Activated CD8-positive, alpha-beta T cell treated with anti-CD3 and anti-CD28 coated beads for 36 hours (primary cell): ENCODE measurements at regions of chr4 and their contacts with region 1.

Region 1: DNA sequence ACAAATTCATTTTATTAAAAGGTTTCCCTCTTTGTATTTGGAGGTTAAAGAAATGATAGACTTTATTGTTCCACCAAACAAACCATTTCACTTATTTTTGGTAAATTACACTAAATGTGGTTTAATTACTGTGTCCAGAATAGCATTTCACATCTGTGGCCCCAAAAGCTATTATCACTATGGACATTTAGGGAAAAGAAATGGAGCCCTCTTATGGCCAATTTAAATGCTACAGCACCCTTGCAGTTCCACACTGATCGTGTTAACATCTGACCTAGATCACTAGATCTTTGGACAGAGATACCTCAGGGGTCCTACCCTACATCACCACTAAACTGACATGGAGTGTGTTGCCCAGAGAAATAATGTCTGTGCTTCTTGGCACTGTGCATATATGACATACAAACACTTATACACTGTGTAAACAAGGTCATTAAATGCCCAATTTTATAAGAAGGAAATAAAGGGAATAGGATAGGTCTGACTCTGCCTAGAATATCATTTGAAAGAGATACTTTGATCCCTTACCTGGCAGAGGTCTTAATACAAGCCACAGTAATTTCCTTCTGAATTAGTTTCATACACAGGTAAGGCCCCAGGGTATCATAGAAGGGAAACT is 163.9 kb downstream of the KDR start:
- DNase-seq: no peak
- ATAC-seq: peak; percentile 60
- H3K4me3 Mint-ChIP-seq: no peak overlapping the region
- H3K27ac Mint-ChIP-seq: no peak overlapping the region
- H3K4me1 Mint-ChIP-seq: peaks cover 15% of the 10 kb centered on the region
- H3K27me3 Mint-ChIP-seq: no peaks in the 10 kb centered on the region
- CTCF ChIP-seq: peak; percentile 38

Region 2: GRCh38 chr4:54683616-54684346 is 277.7 kb before region 1 on chr4:
- CTCF ChIA-PET with region 1: interaction called, 9 read pairs
- POLR2A ChIA-PET with region 1: no interaction called
- intact Hi-C with region 1: loop called (anchors 5 kb)
- DNase-seq: peak; percentile 73
- ATAC-seq: peak; percentile 76
- H3K4me3 Mint-ChIP-seq: no peak overlapping the region
- H3K27ac Mint-ChIP-seq: peak overlapping the region; percentile 55
- H3K4me1 Mint-ChIP-seq: peaks cover 21% of the 10 kb centered on the region
- H3K27me3 Mint-ChIP-seq: no peaks in the 10 kb centered on the region
- CTCF ChIP-seq: peak; percentile 41

Region 3: GRCh38 chr4:54695337-54695736 is 266.1 kb before region 1 on chr4:
- CTCF ChIA-PET with region 1: no interaction called
- POLR2A ChIA-PET with region 1: no interaction called
- intact Hi-C with region 1: no loop called
- DNase-seq: no peak
- ATAC-seq: no peak
- H3K4me3 Mint-ChIP-seq: no peak overlapping the region
- H3K27ac Mint-ChIP-seq: no peak overlapping the region
- H3K4me1 Mint-ChIP-seq: no peaks in the 10 kb centered on the region
- H3K27me3 Mint-ChIP-seq: no peaks in the 10 kb centered on the region
- CTCF ChIP-seq: no peak

Region 4: DNA sequence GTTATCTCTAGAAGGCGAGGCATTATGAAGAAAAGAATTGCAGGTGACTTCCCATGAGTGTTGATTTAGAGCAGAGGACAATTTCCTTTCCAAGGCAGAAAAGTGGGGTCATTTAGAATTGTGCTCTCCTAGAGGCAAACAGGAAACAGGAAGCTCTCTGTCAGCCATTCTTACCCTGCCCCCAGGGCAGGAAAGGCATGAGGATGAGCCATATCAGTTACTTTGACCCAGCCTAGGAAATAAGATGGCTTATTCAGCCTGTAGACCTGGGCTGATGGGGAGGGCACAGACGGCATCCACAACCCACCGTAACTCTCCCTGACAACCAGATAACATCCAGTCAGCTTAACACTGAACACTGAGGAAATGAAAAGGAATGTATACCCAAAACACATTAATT is 252.7 kb after region 1 on chr4:
- CTCF ChIA-PET with region 1: no interaction called
- POLR2A ChIA-PET with region 1: no interaction called
- intact Hi-C with region 1: no loop called
- DNase-seq: no peak
- ATAC-seq: no peak
- H3K4me3 Mint-ChIP-seq: no peak overlapping the region
- H3K27ac Mint-ChIP-seq: no peak overlapping the region
- H3K4me1 Mint-ChIP-seq: no peaks in the 10 kb centered on the region
- H3K27me3 Mint-ChIP-seq: peaks cover 8% of the 10 kb centered on the region
- CTCF ChIP-seq: no peak